ENCODE measurements at regions of chr5 and their contacts with region 1.

Region 1: DNA sequence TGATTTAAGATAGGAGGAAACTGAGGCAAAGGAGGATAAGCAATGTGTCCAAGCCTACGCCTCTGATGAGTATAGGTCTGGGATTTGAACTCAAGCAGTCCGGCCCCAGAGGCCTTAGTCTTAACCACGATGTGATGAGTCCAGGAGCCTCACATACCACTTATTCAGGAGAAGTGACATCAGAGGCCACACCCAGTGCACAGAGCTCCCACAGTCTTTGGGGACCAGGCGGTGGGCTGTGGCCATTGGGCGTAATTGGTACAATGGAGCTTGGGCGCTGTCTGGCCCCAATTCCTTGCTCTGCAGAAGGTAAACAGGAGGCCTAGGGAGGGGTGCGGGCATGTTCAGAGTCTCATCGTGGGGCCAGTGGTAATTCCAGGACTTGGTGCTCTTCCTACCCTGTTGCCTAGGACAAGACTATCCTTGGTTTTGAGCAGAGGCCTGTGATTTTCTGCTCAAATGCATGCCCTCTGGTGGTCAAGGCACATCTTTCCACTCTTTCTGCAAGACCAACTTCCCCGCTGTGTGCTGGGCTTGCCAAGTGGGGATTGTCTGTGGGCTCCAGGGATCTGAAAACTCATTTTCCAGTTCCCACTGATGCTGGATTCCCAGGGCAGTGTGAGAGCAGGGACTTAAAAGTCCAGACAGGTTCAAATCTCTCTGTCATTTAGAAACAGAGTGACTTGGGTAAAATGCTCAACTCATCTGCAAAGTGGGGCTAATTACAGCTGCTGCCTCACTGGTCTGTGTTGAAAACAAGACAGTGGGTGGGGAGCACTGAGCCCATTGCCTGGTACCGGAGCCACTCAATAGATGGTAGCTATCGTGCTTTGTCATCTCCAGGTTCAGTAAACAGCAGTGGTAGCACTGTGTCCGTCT is 15.8 kb downstream of the NDST1 start:
- DNase-seq: peak; percentile 75
- CTCF ChIP-seq: peak; percentile 44

Region 2: DNA sequence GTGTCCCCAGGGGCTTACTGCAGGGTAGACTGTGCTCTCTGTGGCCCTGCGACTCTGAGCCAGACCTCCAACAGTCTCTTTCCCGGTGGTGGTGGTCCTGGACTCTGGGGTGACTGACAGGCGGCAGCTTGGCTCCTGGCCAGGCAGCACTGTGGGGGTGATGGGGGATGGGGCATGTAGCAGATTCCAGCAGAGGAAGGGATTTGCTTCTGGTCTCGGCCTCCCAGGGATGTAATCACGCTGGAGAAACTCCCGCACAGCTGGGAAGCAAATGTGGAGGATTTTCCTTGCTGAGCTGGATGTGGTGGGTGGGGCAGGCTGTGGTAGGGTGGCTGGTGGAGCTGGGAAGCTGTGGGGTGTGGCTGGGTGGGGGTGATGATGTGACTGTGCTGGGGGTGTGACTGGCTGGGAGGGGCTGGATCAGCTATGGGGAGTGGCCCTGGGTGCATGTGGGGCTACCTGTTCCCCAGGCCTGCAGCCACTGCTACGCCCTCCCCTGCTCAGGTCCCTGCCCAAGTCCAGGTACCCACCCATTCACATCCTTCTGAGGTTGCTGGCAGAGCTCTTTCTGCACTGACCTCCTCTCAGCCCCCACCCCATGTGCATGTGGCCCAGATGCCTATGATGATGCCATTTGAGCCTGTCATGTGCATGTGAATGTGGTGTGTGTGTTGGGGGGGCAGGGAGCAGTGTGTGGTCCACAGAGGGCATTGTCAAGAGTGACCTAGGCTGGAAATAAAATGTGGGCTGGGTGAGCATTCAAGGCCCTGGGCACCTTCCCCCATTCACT is 11.9 kb before region 1 on chr5:
- CTCF ChIA-PET with region 1: interaction called, 29 read pairs
- POLR2A ChIA-PET with region 1: no interaction called
- DNase-seq: no peak
- CTCF ChIP-seq: no peak

Region 3: DNA sequence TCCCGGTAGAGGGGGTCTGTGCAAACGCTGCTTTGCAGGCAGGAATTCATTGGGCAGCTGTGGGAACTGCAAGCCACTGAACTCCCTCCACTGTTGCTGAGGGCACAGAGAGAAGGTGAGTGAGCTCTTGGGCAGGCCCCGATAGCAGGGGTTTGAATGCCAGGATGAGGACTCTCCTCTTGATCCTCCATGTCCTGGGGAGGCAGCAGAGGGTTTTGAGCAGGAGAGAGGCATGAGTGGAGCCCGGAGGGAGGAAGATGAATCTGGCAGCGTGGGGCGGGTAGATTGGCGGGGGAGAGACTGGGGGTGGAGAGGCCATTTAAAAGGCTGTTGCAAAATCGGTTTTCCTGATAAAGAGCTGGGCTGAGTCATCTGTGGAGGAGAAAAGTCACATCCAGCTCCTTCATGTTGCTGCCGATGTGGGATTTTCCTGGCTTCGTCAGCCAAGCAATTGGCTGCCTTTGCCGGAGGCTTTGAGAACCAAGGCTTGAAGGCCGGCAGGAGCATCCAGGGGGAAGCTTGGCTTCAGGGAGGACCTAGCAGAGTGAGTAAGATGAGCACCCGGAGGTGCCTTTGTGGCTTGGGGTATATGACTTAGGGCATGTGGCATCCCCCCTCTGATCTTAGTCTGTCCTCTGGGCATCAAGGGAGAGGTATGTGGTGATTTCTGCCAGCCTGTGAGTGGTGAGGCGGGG is 116.7 kb after region 1 on chr5 and contains the start of gene SYNPO:
- CTCF ChIA-PET with region 1: no interaction called
- POLR2A ChIA-PET with region 1: no interaction called
- DNase-seq: no peak
- CTCF ChIP-seq: no peak